Sigmoid colon (tissue), 7 donors: ENCODE measurements at regions of chr2 and their contacts with region 1.

Region 1: DNA sequence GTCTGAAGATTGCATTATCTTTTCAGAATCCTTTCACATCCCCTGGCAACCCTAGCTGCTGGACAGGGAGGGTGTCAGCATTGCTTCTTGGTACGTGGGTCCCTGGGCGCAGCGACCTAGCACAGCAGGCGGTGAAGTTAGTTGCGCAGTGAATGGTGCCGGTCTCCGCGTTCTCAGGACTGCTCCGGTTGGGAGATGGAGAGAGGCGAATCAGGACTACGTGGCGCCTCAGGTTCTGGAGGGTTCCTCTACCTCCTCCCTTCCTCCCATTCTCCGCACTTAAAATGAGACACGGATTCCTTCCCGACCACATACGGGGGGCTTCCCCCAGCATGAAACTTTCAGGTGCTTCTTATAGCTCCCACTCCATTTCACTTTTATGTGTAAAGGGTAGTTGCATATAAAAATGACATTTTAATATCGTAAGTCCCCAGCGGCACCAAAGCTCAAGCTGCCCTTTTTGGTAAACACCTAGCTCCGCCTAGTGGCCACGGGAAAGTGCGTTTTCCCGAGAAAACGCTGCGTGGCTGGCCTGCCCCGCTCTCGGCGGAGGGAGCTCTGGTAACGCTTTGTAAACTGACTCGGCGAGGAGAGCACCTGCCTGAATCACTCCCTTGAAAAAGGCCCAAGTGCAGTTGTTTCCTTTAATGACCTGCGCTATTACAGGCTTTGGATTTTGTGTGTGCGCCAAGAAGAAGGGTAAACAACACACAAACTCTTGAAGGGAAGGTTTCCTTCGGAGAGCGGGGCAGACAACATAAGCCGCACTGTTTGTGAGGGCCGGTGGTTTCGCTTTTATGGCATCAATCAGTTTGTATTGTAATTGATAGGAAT is 32.9 kb upstream of the INHBB start:
- DNase-seq: peak; percentile 87
- H3K4me3 ChIP-seq: peak overlapping the region; percentile 16 to 45 (median 40)
- H3K27ac ChIP-seq: peak overlapping the region in 2 of 4 donors; percentile 30 to 48
- H3K4me1 ChIP-seq: peaks cover 0 to 17% (median 13%) of the 10 kb centered on the region in 4 donors
- H3K27me3 ChIP-seq: no peaks in the 10 kb centered on the region
- CTCF ChIP-seq: peak; percentile 69 to 85 (median 78)
- EP300 ChIP-seq: no peak
- POLR2A ChIP-seq: no peak

Region 2: GRCh38 chr2:120206022-120206581 is 107.0 kb before region 1 on chr2:
- intact Hi-C with region 1: loop called (anchors 5 kb)
- DNase-seq: no peak
- H3K4me3 ChIP-seq: no peak overlapping the region
- H3K27ac ChIP-seq: no peak overlapping the region
- H3K4me1 ChIP-seq: peaks cover 0 to 5% (median 0%) of the 10 kb centered on the region in 4 donors
- H3K27me3 ChIP-seq: no peaks in the 10 kb centered on the region
- CTCF ChIP-seq: peak in 1 of 4 experiments; percentile 19
- EP300 ChIP-seq: no peak
- POLR2A ChIP-seq: no peak

Region 3: DNA sequence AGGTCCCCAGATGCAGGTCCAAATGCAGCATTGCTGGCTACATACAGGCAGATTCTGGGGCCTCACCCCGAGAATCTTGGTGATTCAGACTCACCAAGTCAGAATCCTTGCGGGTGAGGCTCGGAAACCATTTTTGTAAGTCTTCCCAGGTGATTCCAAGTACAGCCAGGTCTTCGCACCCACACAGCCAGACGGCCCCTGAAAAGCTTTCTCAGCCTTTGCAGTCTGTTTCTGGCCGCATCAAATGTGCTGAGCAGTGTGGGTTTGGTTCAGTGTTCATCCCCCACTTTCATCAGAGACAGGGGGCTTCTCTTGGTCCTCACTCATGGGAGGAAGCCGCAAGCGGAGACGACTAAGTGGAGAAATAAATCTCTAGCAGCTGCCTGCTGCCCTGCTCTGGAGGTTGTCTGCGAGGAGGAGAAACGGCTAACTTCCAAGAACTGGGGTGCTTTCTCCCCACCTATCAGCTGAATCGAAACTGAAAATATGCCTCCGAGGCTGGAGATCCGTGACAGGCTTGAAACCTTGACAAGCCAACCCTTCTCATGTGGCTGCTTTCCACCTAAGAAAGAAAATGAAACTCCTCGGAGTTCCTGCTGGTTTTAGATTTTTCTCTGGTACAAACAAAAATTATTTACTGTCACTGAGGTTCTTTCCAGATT is 81.0 kb before region 1 on chr2:
- intact Hi-C with region 1: loop called (anchors 1 kb)
- DNase-seq: peak; percentile 64
- H3K4me3 ChIP-seq: peak overlapping the region; percentile 19 to 50 (median 46)
- H3K27ac ChIP-seq: peak overlapping the region; percentile 51 to 71 (median 66)
- H3K4me1 ChIP-seq: peaks cover 0 to 23% (median 13%) of the 10 kb centered on the region in 4 donors
- H3K27me3 ChIP-seq: no peaks in the 10 kb centered on the region
- CTCF ChIP-seq: no peak
- EP300 ChIP-seq: no peak
- POLR2A ChIP-seq: no peak

Region 4: GRCh38 chr2:120252225-120253021 is 60.7 kb before region 1 on chr2 and contains the start of gene RALB:
- intact Hi-C with region 1: loop called (anchors 2 kb)
- DNase-seq: peak; percentile 100
- H3K4me3 ChIP-seq: peak within 1 kb of the TSS; percentile 57 to 98 (median 88)
- H3K27ac ChIP-seq: peak within 1 kb of the TSS; percentile 85 to 94 (median 92)
- H3K4me1 ChIP-seq: peaks cover 0 to 27% (median 14%) of the 10 kb centered on the region in 4 donors
- H3K27me3 ChIP-seq: no peaks in the 10 kb centered on the region
- CTCF ChIP-seq: no peak
- EP300 ChIP-seq: no peak
- POLR2A ChIP-seq: peak; percentile 40 to 90
- total RNA-seq, gene RALB: 47.9 to 60.2 (median 50.5) TPM